A549 (cell line): ENCODE measurements at regions of chr4 and their contacts with region 1.

Region 1: GRCh38 chr4:122758033-122758432 is 25.5 kb downstream of the BBS12 start:
- DNase-seq: peak in 1 of 2 experiments; percentile 48
- ATAC-seq: peak; percentile 73 to 78
- H3K4me3 ChIP-seq: no peak overlapping the region
- H3K27ac ChIP-seq: peak overlapping the region; percentile 77 to 82
- H3K4me1 ChIP-seq: peaks cover 38% of the 10 kb centered on the region
- CTCF ChIP-seq: peak; percentile 78
- EP300 ChIP-seq: no peak
- POLR2A ChIP-seq: no peak
- RAD21 ChIP-seq: peak; percentile 80 to 87

Region 2: DNA sequence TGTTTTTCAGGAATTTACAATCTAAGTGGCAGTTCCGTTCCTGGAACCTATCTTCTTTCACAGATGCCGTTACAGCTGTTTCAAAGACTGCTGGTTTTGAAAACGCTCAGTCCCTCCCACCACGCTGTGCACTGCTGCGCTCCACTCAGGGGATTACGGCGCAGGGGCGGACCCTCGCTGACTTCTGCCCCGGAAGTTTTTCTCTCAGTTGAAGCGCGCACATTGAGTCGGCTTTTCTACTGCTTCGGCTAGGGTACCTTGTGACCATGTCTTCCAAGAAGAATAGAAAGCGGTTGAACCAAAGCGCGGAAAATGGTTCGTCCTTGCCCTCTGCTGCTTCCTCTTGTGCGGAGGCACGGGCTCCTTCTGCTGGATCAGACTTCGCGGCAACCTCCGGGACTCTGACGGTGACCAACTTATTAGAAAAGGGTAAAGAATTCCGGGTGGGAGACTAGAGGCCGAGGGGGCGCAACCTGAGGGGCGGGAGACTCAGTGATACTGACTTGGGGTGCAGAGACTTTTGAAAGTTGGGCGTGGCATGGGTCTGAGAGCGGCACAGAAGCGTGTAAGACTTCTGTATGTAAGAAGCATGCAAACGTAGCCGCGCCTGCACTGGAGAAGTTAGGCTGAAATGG is 165.0 kb after region 1 on chr4:
- CTCF ChIA-PET with region 1: interaction called, 22 read pairs
- POLR2A ChIA-PET with region 1: interaction called, 3 read pairs
- DNase-seq: peak; percentile 72 to 87
- ATAC-seq: peak; percentile 94 to 96
- H3K4me3 ChIP-seq: peak overlapping the region; percentile 87
- H3K27ac ChIP-seq: peak overlapping the region; percentile 89 to 98
- H3K4me1 ChIP-seq: peaks cover 41% of the 10 kb centered on the region
- CTCF ChIP-seq: no peak
- EP300 ChIP-seq: no peak
- POLR2A ChIP-seq: no peak
- RAD21 ChIP-seq: no peak

Region 3: DNA sequence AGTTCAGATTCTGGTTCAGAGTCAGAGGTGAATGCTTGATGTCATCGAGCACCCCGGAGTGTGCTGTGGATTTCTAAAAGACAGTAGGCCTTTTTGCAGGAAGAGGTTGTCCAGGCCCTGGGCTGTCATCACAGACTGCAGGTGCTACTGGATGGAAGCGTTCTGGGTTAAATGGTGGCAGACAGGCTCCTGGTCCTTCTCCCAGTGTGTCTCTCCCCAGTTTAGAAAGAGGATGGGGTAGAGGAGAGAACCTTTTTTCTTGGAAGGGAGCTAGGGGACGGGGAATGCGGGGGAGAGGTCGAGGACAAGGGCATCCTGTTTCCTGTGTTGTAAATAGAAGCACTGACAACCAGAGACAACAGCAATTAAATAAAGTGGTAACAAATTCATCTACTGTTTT is 266.7 kb after region 1 on chr4:
- CTCF ChIA-PET with region 1: no interaction called
- POLR2A ChIA-PET with region 1: no interaction called
- DNase-seq: no peak
- ATAC-seq: no peak
- H3K4me3 ChIP-seq: no peak overlapping the region
- H3K27ac ChIP-seq: no peak overlapping the region
- H3K4me1 ChIP-seq: no peaks in the 10 kb centered on the region
- CTCF ChIP-seq: no peak
- EP300 ChIP-seq: no peak
- POLR2A ChIP-seq: no peak
- RAD21 ChIP-seq: no peak